Endothelial cell of umbilical vein (primary cell): ENCODE measurements at regions of chr10 and their contacts with region 1.

Region 1: DNA sequence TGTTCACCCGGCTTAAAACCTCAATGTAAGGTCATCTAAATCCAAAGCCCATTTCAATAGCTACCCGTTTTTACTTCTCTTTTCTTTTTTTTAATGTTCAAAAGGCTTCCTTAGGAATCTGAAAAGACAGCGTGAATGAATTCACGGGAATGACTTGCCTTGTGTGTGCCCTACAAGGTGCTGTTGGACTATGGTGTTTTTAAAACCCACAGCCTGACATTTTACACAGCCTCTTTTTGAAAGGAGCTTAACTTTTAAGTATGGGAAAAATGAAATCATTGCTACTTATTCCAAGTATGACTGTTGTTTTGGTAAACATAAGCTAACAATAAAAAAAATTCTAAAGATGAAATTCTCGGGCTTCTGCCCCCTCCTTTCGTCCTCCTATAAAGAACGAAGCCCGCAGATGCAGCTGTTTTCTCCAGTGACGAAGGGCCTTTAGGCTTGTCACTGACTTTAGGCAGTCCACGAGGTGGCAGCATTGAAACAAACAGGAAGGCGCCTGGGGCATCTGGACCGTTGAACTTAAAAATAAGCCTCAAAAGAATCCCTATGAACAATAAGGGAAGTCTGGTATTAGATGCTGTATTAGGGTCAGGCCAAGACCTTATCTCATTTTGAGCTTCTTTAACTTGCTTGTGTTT is 141.3 kb downstream of the NRP1 start:
- DNase-seq: peak; percentile 86
- H3K4me3 ChIP-seq: no peak overlapping the region
- H3K27ac ChIP-seq: peak overlapping the region; percentile 59
- H3K4me1 ChIP-seq: peaks cover 50% of the 10 kb centered on the region
- H3K27me3 ChIP-seq: no peaks in the 10 kb centered on the region
- CTCF ChIP-seq: peak; percentile 72 to 75
- POLR2A ChIP-seq: peak; percentile 23

Region 2: GRCh38 chr10:32795598-32796183 is 397.5 kb before region 1 on chr10:
- CTCF ChIA-PET with region 1: no interaction called
- POLR2A ChIA-PET with region 1: no interaction called
- dilution Hi-C with region 1: no loop called
- intact Hi-C with region 1: loop called (anchors 10 kb)
- DNase-seq: peak; percentile 55
- H3K4me3 ChIP-seq: no peak overlapping the region
- H3K27ac ChIP-seq: no peak overlapping the region
- H3K4me1 ChIP-seq: no peaks in the 10 kb centered on the region
- H3K27me3 ChIP-seq: peaks cover 0 to 2% of the 10 kb centered on the region in 2 experiments
- CTCF ChIP-seq: peak; percentile 39 to 45
- POLR2A ChIP-seq: no peak

Region 3: DNA sequence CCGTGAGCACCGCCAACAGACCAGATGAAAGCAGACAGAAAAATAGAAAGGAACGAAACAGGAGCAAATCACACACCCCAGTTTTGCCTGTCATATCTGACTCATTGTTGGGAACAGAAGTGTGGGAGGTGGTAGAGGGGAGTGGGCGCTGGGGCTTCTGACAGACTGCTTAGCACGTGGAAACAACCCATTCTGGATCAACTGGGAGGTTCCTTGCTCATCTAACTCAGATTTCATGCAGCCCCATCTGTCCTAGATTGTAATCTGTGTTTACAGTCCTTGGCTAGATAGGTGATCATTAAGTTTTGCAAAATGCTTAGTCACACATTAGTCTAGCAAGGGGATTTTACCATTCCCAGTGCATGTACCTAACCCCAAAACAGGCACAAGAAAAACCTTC is 12.8 kb before region 1 on chr10:
- CTCF ChIA-PET with region 1: interaction called, 11 read pairs
- POLR2A ChIA-PET with region 1: no interaction called
- dilution Hi-C with region 1: no loop called
- intact Hi-C with region 1: loop called (anchors 2 kb)
- DNase-seq: no peak
- H3K4me3 ChIP-seq: no peak overlapping the region
- H3K27ac ChIP-seq: peak overlapping the region; percentile 3
- H3K4me1 ChIP-seq: peaks cover 26% of the 10 kb centered on the region
- H3K27me3 ChIP-seq: no peaks in the 10 kb centered on the region
- CTCF ChIP-seq: no peak
- POLR2A ChIP-seq: no peak

Region 4: GRCh38 chr10:33223326-33224000 is 30.3 kb after region 1 on chr10:
- CTCF ChIA-PET with region 1: no interaction called
- POLR2A ChIA-PET with region 1: no interaction called
- dilution Hi-C with region 1: no loop called
- intact Hi-C with region 1: no loop called
- DNase-seq: no peak
- H3K4me3 ChIP-seq: no peak overlapping the region
- H3K27ac ChIP-seq: no peak overlapping the region
- H3K4me1 ChIP-seq: peaks cover 22% of the 10 kb centered on the region
- H3K27me3 ChIP-seq: no peaks in the 10 kb centered on the region
- CTCF ChIP-seq: no peak
- POLR2A ChIP-seq: no peak

Region 5: GRCh38 chr10:33234831-33235237 is 41.7 kb after region 1 on chr10:
- CTCF ChIA-PET with region 1: interaction called, 12 read pairs
- POLR2A ChIA-PET with region 1: no interaction called
- dilution Hi-C with region 1: no loop called
- intact Hi-C with region 1: loop called (anchors 1 kb)
- DNase-seq: peak; percentile 87
- H3K4me3 ChIP-seq: no peak overlapping the region
- H3K27ac ChIP-seq: peak overlapping the region; percentile 99
- H3K4me1 ChIP-seq: peaks cover 71% of the 10 kb centered on the region
- H3K27me3 ChIP-seq: no peaks in the 10 kb centered on the region
- CTCF ChIP-seq: no peak
- POLR2A ChIP-seq: no peak

Region 6: GRCh38 chr10:33258967-33259366 is 65.8 kb after region 1 on chr10:
- CTCF ChIA-PET with region 1: interaction called, 20 read pairs
- POLR2A ChIA-PET with region 1: interaction called, 3 read pairs
- dilution Hi-C with region 1: no loop called
- intact Hi-C with region 1: no loop called
- DNase-seq: no peak
- H3K4me3 ChIP-seq: no peak overlapping the region
- H3K27ac ChIP-seq: no peak overlapping the region
- H3K4me1 ChIP-seq: peaks cover 48% of the 10 kb centered on the region
- H3K27me3 ChIP-seq: no peaks in the 10 kb centered on the region
- CTCF ChIP-seq: no peak
- POLR2A ChIP-seq: no peak

Region 7: DNA sequence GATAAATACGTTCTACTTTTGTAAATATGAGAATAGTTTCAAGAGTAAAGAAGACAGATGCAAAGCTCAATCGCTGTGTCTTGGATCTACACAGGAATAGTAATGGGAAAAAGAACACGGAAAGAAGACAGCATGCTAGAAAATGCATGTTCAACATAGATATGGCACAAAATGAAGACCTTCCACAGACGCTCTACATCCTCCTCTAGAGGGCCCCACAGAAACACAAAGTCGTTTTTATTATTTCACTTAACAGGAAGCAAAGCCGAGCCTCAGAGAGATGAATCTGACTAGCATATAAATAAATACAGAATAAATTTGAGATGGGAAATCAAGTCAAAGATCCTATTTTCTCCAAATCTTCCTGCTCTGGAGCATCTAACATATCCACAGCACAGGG is 1329.4 kb after region 1 on chr10:
- CTCF ChIA-PET with region 1: interaction called, 3 read pairs
- POLR2A ChIA-PET with region 1: no interaction called
- dilution Hi-C with region 1: no loop called
- intact Hi-C with region 1: loop called (anchors 10 kb)
- DNase-seq: peak; percentile 53
- H3K4me3 ChIP-seq: no peak overlapping the region
- H3K27ac ChIP-seq: no peak overlapping the region
- H3K4me1 ChIP-seq: peaks cover 22% of the 10 kb centered on the region
- H3K27me3 ChIP-seq: no peaks in the 10 kb centered on the region
- CTCF ChIP-seq: peak; percentile 35 to 51
- POLR2A ChIP-seq: no peak